Gastrocnemius medialis (tissue), 4 donors: ENCODE measurements at regions of chr6 and their contacts with region 1.

Region 1: DNA sequence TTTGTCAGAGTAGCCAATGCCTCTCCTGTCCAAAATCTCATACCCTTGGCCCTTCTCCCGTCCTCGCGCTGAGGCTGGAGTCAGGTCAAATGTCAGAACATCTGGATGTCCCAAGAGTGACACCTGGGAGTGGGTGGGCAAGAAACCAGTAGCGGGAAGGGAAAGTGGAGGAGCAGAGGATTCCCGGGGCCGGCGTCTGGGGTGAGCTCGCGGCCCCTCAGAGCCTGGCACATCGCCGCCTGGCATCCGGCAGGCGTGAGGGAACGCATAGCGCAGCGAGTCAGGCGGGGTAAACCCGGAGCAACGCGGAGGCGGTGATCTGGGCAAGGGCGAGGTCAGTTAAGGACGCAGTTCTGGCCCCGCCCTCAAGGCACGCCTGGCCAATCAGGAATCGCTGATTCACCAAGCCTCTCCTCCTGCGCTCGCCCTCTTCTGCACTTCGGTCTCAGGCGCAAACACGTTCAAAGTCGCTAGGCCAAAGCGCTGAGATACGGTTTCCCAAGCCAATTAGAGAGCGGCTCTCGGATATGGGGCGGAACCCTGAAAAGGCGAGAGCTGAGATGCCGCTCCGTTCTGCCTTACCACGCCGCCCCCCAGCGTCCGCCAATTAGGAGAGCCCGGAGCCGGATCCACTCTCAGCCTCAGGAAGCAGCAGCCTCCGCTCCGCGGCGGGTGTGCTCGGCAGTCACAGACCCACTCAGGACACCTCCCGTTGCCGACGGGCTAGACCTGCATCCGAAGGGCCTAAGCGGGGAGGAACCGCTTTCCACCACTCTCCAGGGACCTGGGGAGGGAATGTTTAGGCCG is 22.5 kb downstream of the VPS52 start:
- DNase-seq: peak; percentile 96 to 98
- ATAC-seq: peak; percentile 96 to 98
- H3K4me3 ChIP-seq: peak overlapping the region; percentile 54 to 83 (median 65)
- H3K27ac ChIP-seq: peak overlapping the region; percentile 84 to 96 (median 88)
- H3K4me1 ChIP-seq: peaks cover 10 to 17% of the 10 kb centered on the region in 2 donors
- H3K27me3 ChIP-seq: no peaks in the 10 kb centered on the region
- CTCF ChIP-seq: peak in 2 of 5 experiments; percentile 16 to 30
- POLR2A ChIP-seq: peak; percentile 51 to 63

Region 2: DNA sequence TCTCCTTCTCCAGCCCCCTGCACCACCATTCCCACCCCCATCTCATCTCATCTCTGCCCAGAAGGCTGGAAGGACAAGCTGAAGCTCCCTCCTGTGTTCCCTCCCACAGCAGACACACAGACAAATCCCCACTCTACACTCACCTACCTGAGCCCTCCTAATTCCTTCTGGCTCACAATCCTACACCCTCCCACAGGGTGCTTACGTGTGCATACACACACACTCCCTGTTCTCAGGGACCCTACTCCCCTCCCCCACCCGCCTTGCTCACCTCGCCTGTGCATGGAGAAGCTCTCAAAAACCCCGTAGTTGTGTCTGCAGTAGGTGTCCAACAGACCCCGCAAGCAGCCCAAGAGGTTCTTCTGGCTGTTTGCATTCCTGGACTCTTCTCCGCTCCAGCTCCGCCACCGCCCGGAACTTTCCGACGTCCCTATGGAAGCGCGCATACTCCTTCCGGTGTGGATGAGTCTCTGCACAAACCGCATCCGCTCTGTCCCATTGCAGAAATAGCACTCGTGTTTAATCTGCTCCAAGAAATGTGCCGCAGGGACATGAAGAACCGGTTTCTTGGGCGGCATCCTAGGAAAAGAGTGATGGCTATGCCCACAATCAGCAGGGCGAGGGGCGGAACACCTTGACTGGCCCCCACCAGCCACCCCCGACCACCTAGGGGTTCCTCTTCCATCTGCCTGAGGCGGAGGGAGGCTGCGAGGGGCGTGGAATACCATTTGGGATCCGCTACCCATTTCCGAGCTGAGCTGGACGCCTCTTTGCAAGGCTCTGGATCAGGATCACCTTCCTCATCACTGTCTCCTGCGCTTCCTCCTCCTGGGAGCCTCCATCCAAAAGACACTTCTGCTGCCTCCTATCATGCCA is 789.3 kb before region 1 on chr6:
- in situ Hi-C with region 1: no loop called
- intact Hi-C with region 1: no loop called
- DNase-seq: no peak
- ATAC-seq: no peak
- H3K4me3 ChIP-seq: peak overlapping the region in 1 of 4 donors; percentile 29
- H3K27ac ChIP-seq: no peak overlapping the region
- H3K4me1 ChIP-seq: no peaks in the 10 kb centered on the region
- H3K27me3 ChIP-seq: peaks cover 0 to 2% (median 0%) of the 10 kb centered on the region in 3 donors
- CTCF ChIP-seq: no peak
- POLR2A ChIP-seq: no peak

Region 3: DNA sequence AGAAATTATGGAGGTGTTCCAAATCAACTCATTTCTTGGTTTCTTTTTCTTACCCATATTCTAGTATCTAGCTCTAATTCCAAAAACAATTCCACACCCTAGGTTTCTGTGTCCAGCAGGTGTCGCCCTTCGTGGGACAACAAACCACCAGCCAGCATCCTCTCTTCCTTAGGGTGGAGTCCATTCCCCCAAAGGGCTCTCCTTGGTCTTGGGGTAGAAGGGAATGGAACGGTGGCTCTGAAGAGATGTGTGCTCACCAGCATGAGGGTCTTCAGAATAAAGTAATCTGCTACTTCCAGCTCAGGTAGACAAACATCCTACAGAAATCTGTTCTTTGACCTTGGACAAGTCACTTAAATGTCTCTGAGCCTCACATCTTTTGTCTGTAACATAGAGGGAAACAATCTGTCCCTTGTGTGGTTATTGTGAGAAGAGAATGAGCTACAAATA is 315.5 kb before region 1 on chr6:
- in situ Hi-C with region 1: no loop called
- intact Hi-C with region 1: loop called (anchors 2 kb)
- DNase-seq: peak; percentile 33 to 70
- ATAC-seq: peak; percentile 54 to 77
- H3K4me3 ChIP-seq: no peak overlapping the region
- H3K27ac ChIP-seq: no peak overlapping the region
- H3K4me1 ChIP-seq: no peaks in the 10 kb centered on the region
- H3K27me3 ChIP-seq: no peaks in the 10 kb centered on the region
- CTCF ChIP-seq: peak; percentile 74 to 88 (median 86)
- POLR2A ChIP-seq: no peak

Region 4: DNA sequence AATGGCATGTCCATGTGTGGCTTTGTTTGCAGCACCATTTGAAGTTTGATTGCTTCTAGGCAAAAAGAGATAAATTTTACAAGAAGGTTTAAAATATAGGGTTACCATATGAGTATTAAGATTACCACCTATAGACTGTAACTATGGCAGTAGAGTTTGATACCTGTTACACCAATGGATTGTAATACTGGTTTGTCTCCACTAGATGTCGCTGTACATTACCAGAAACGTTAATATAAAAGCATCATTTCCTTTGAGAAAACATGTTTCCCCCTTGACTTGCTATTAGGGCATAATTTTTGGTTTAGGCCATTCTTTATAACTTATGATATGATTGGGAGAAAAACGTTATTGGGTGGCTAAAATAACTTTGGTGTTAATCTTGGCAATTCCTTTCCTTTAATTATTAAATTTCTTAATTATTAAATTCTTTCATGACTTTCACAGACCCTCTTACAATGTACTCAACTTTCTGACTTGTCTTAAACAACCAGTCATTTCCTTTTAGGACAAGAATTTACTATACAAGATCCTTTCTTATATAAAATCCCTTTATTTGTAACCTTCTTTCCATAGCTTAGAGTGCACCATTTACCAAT is 130.5 kb before region 1 on chr6:
- in situ Hi-C with region 1: loop called in 3 of 4 experiments (anchors 5 to 10 kb)
- intact Hi-C with region 1: loop called (anchors 1 kb)
- DNase-seq: no peak
- ATAC-seq: peak; percentile 51 to 52
- H3K4me3 ChIP-seq: no peak overlapping the region
- H3K27ac ChIP-seq: no peak overlapping the region
- H3K4me1 ChIP-seq: no peaks in the 10 kb centered on the region
- H3K27me3 ChIP-seq: peaks cover 24 to 35% (median 29%) of the 10 kb centered on the region in 3 donors
- CTCF ChIP-seq: peak; percentile 73 to 90 (median 82)
- POLR2A ChIP-seq: no peak

Region 5: GRCh38 chr6:33161354-33162331 is 87.5 kb before region 1 on chr6:
- in situ Hi-C with region 1: loop called in 3 of 4 experiments (anchors 5 to 10 kb)
- intact Hi-C with region 1: loop called (anchors 1 kb)
- DNase-seq: peak; percentile 34 to 70
- ATAC-seq: peak; percentile 88 to 94
- H3K4me3 ChIP-seq: peak overlapping the region; percentile 52 to 77 (median 62)
- H3K27ac ChIP-seq: peak overlapping the region in 2 of 4 donors; percentile 15 to 41
- H3K4me1 ChIP-seq: peaks cover 0 to 6% of the 10 kb centered on the region in 2 donors
- H3K27me3 ChIP-seq: no peaks in the 10 kb centered on the region
- CTCF ChIP-seq: peak; percentile 76 to 97 (median 94)
- POLR2A ChIP-seq: no peak

Region 6: GRCh38 chr6:33208091-33208967 is 40.8 kb before region 1 on chr6 and contains the start of gene RING1:
- in situ Hi-C with region 1: no loop called
- intact Hi-C with region 1: loop called (anchors 2 kb)
- DNase-seq: peak; percentile 75 to 80
- ATAC-seq: peak; percentile 78 to 79
- H3K4me3 ChIP-seq: peak within 1 kb of the TSS; percentile 79 to 92 (median 90)
- H3K27ac ChIP-seq: peak within 1 kb of the TSS; percentile 93 to 99 (median 96)
- H3K4me1 ChIP-seq: peaks cover 25 to 37% of the 10 kb centered on the region in 2 donors
- H3K27me3 ChIP-seq: no peaks in the 10 kb centered on the region
- CTCF ChIP-seq: no peak
- POLR2A ChIP-seq: peak; percentile 97 to 99
- total RNA-seq, gene RING1: 7.4 to 16.3 (median 12.1) TPM

Region 7: GRCh38 chr6:33299237-33299944 is 50.3 kb after region 1 on chr6:
- in situ Hi-C with region 1: no loop called
- intact Hi-C with region 1: loop called (anchors 2 kb)
- DNase-seq: peak; percentile 84 to 89
- ATAC-seq: peak; percentile 90 to 93
- H3K4me3 ChIP-seq: peak overlapping the region; percentile 71 to 86 (median 80)
- H3K27ac ChIP-seq: peak overlapping the region; percentile 96 to 99 (median 97)
- H3K4me1 ChIP-seq: peaks cover 11 to 23% of the 10 kb centered on the region in 2 donors
- H3K27me3 ChIP-seq: no peaks in the 10 kb centered on the region
- CTCF ChIP-seq: peak; percentile 55 to 85 (median 80)
- POLR2A ChIP-seq: peak; percentile 78 to 86

Region 8: GRCh38 chr6:33477864-33478263 is 228.7 kb after region 1 on chr6:
- in situ Hi-C with region 1: no loop called
- intact Hi-C with region 1: no loop called
- DNase-seq: no peak
- ATAC-seq: no peak
- H3K4me3 ChIP-seq: no peak overlapping the region
- H3K27ac ChIP-seq: no peak overlapping the region
- H3K4me1 ChIP-seq: no peaks in the 10 kb centered on the region
- H3K27me3 ChIP-seq: no peaks in the 10 kb centered on the region
- CTCF ChIP-seq: no peak
- POLR2A ChIP-seq: no peak